Heart left ventricle (tissue), 16 donors: ENCODE measurements at regions of chr4 and their contacts with region 1.

Region 1: DNA sequence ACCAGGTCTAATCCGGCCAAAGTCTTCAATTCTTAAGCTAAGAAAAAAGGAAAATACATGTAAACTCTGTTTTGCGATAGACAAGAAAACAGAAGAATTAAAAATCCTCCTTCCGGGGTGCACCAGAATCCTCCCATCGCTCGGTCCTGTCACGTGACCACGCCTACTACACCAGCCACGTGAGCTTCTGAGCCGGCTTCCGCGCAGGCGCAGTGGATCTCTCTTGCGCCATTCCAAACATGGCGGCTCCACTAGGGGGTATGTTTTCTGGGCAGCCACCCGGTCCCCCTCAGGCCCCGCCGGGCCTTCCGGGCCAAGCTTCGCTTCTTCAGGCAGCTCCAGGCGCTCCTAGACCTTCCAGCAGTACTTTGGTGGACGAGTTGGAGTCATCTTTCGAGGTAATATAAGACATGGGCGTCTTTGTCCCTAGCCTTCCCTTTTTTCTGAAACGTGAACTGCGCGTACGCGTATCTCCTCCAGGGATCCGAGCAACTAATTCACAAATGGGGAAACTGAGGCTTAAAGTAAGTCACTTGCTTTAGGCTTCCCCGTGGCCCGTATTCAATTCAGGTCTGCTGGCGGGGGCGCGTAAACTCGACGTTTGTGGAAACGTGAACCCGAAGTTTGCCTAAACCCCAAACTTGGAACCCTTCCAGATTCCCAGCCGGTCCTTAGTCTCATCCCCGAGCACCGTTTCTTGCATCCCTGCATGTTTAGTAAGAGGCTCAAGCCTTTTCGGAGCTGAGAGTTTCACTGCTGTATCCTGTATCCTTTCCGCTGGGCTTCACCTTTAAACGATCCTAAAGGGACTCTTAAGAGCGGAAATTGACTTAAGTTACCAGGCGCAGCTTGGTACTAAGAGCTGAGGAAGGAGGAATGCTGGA is at the start of gene MED28:
- DNase-seq: peak; percentile 95 to 98 (median 97)
- ATAC-seq: peak; percentile 95 to 98 (median 96)
- H3K4me3 ChIP-seq: peak within 1 kb of the TSS; percentile 73 to 100 (median 83)
- H3K27ac ChIP-seq: peak within 1 kb of the TSS; percentile 65 to 92 (median 82)
- H3K4me1 ChIP-seq: peaks cover 14 to 52% (median 37%) of the 10 kb centered on the region in 12 donors
- H3K27me3 ChIP-seq: no peaks in the 10 kb centered on the region
- CTCF ChIP-seq: peak in 6 of 12 donors; percentile 4 to 46 (median 30)
- POLR2A ChIP-seq: peak in 1 of 2 donors; percentile 77
- total RNA-seq, gene MED28: 4.4 to 22.1 (median 15.0) TPM

Region 2: GRCh38 chr4:17427991-17428390 is 186.7 kb before region 1 on chr4:
- intact Hi-C with region 1: no loop called
- DNase-seq: no peak
- ATAC-seq: no peak
- H3K4me3 ChIP-seq: no peak overlapping the region
- H3K27ac ChIP-seq: no peak overlapping the region
- H3K4me1 ChIP-seq: no peaks in the 10 kb centered on the region
- H3K27me3 ChIP-seq: no peaks in the 10 kb centered on the region
- CTCF ChIP-seq: no peak
- POLR2A ChIP-seq: no peak

Region 3: GRCh38 chr4:17576932-17577665 is 37.6 kb before region 1 on chr4 and contains the start of gene LAP3:
- intact Hi-C with region 1: loop called in 9 of 10 experiments (anchors 1 to 5 kb)
- DNase-seq: peak; percentile 97 to 99 (median 98)
- ATAC-seq: peak; percentile 93 to 99 (median 96)
- H3K4me3 ChIP-seq: peak within 1 kb of the TSS; percentile 47 to 96 (median 82)
- H3K27ac ChIP-seq: peak within 1 kb of the TSS; percentile 89 to 96 (median 94)
- H3K4me1 ChIP-seq: peaks cover 0 to 46% (median 34%) of the 10 kb centered on the region in 12 donors
- H3K27me3 ChIP-seq: no peaks in the 10 kb centered on the region
- CTCF ChIP-seq: peak in 1 of 12 donors; percentile 14
- POLR2A ChIP-seq: peak; percentile 21 to 94
- total RNA-seq, gene LAP3: 52.7 to 281 (median 66.1) TPM

Region 4: DNA sequence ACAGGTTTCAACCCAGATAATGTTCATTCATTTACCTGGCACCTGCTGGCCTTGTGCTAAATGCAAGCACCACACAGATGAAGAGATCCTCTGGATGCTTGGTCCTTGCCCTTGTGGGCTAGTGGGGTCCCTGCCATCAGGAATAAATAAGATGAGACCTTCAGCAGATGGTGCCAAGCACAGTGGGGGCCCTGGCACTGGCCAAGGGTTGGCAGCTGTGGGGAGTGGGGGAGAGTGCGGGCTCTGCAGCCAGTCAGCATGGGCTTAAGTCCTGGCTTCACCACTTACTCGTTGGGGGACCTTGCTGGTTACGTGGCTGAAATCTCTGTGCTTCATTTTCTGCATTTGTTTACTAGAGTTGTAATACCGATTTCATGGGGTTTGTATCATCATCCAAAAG is 30.7 kb before region 1 on chr4:
- intact Hi-C with region 1: loop called in 5 of 10 experiments (anchors 2 to 5 kb)
- DNase-seq: no peak
- ATAC-seq: no peak
- H3K4me3 ChIP-seq: no peak overlapping the region
- H3K27ac ChIP-seq: no peak overlapping the region
- H3K4me1 ChIP-seq: peaks cover 0 to 40% (median 24%) of the 10 kb centered on the region in 12 donors
- H3K27me3 ChIP-seq: no peaks in the 10 kb centered on the region
- CTCF ChIP-seq: no peak
- POLR2A ChIP-seq: no peak